ENCODE measurements at regions of chrX and their contacts with region 1.

Region 1: GRCh38 chrX:129678614-129679195 is 23.9 kb upstream of the APLN start:
- DNase-seq: peak; percentile 18 to 65
- ATAC-seq: peak; percentile 60 to 70 (median 66)
- H3K4me3 ChIP-seq: peak overlapping the region; percentile 46
- H3K4me3 Mint-ChIP-seq: peak overlapping the region; percentile 59
- H3K27ac ChIP-seq: peak overlapping the region; percentile 49
- H3K27ac Mint-ChIP-seq: peak overlapping the region in 1 of 2 donors; percentile 75
- H3K4me1 ChIP-seq: peaks cover 18% of the 10 kb centered on the region
- H3K4me1 Mint-ChIP-seq: peaks cover 0 to 20% of the 10 kb centered on the region in 2 donors
- H3K27me3 ChIP-seq: no peaks in the 10 kb centered on the region
- H3K27me3 Mint-ChIP-seq: peaks cover 3 to 7% of the 10 kb centered on the region in 2 donors
- CTCF ChIP-seq: no peak

Region 2: DNA sequence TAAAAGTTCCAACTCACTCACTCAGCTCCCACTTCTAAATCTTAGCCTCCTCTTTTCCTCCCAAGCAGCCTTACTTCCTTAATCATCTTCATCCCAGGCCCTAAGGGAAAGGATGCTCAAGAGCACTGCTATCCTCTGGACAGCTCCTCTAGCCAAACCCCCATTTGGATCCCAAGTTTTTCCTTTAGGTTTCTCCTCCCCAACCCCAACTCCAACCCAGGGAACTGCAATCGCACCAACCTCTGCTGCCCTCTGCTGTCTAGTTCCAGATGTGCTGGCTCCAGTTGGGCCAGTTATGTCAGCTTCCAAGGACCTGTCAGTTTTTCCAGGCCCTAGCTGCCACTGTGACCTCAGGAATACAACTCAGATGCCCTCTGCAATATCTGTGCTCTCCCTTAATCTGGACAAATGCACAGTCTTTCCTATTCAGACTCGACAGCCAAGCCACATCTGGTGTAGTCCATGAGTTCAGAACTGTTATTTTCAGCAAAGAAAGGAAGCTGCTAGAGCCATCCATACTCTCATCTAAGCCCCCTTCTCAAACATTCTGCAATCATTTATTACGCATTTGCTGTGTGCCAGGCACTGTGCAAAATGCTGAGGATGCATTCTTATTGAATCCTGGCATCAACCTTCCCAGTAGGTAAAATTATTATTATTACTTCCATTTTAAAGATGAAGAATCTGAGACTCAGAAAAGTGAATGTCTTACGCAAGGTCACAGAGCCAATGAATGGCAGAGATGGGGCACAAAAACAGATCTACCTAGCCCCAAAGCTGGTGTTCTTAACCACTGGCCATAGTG is 47.8 kb after region 1 on chrX:
- intact Hi-C with region 1: loop called (anchors 10 kb)
- DNase-seq: peak in 1 of 2 donors; percentile 56
- ATAC-seq: peak in 2 of 3 donors; percentile 44 to 58
- H3K4me3 ChIP-seq: no peak overlapping the region
- H3K4me3 Mint-ChIP-seq: no peak overlapping the region
- H3K27ac ChIP-seq: no peak overlapping the region
- H3K27ac Mint-ChIP-seq: no peak overlapping the region
- H3K4me1 ChIP-seq: peaks cover 10% of the 10 kb centered on the region
- H3K4me1 Mint-ChIP-seq: peaks cover 22 to 35% of the 10 kb centered on the region in 2 donors
- H3K27me3 ChIP-seq: no peaks in the 10 kb centered on the region
- H3K27me3 Mint-ChIP-seq: peaks cover 0 to 25% of the 10 kb centered on the region in 2 donors
- CTCF ChIP-seq: peak; percentile 50